ENCODE measurements at regions of chr12 and their contacts with region 1.

Region 1: GRCh38 chr12:111753144-111753881 is 13.4 kb upstream of the ALDH2 start:
- DNase-seq: peak in 2 of 3 donors; percentile 40 to 47
- H3K4me3 ChIP-seq: no peak overlapping the region
- H3K4me3 Mint-ChIP-seq: no peak overlapping the region
- H3K27ac ChIP-seq: peak overlapping the region in 1 of 2 donors; percentile 9
- H3K27ac Mint-ChIP-seq: peak overlapping the region in 1 of 7 donors; percentile 18
- H3K4me1 ChIP-seq: peaks cover 13 to 14% of the 10 kb centered on the region in 2 donors
- H3K4me1 Mint-ChIP-seq: peaks cover 19% of the 10 kb centered on the region
- H3K27me3 ChIP-seq: no peaks in the 10 kb centered on the region
- H3K27me3 Mint-ChIP-seq: peaks cover 0 to 3% (median 2%) of the 10 kb centered on the region in 3 donors
- CTCF ChIP-seq: peak; percentile 85

Region 2: DNA sequence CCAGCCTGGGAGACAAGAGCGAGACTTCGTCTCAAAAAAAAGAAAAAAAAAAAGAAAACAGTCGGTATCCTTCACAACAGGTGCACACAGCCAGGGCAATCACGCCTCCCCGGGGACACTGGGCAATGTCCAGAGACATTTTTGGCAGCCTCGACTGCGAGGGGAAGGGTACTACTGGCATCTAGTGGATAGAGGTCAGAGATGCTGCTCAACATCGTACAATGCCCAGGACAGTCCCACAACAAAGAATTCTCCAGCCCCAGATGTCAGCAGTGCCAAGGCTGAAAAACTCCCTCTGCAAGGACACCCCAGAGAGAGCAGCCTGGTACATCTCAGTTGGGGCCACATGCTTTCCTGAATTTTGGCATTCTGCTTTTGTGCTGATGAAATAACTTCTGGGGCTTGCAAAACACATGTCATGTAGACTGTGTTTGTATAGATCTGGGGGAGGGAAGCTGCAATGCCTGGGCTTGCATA is 34.9 kb after region 1 on chr12:
- intact Hi-C with region 1: loop called (anchors 2 to 5 kb)
- DNase-seq: peak in 2 of 3 donors; percentile 31 to 40
- H3K4me3 ChIP-seq: no peak overlapping the region
- H3K4me3 Mint-ChIP-seq: no peak overlapping the region
- H3K27ac ChIP-seq: peak overlapping the region in 1 of 2 donors; percentile 33
- H3K27ac Mint-ChIP-seq: peak overlapping the region in 4 of 7 donors; percentile 52 to 74 (median 61)
- H3K4me1 ChIP-seq: no peaks in the 10 kb centered on the region
- H3K4me1 Mint-ChIP-seq: peaks cover 4% of the 10 kb centered on the region
- H3K27me3 ChIP-seq: no peaks in the 10 kb centered on the region
- H3K27me3 Mint-ChIP-seq: no peaks in the 10 kb centered on the region
- CTCF ChIP-seq: peak; percentile 51

Region 3: GRCh38 chr12:111812881-111813741 is 59.8 kb after region 1 on chr12:
- intact Hi-C with region 1: loop called (anchors 2 to 10 kb)
- DNase-seq: peak; percentile 61 to 78 (median 73)
- H3K4me3 ChIP-seq: no peak overlapping the region
- H3K4me3 Mint-ChIP-seq: no peak overlapping the region
- H3K27ac ChIP-seq: peak overlapping the region in 1 of 2 donors; percentile 32
- H3K27ac Mint-ChIP-seq: peak overlapping the region in 5 of 7 donors; percentile 1 to 75 (median 65)
- H3K4me1 ChIP-seq: peaks cover 8 to 13% of the 10 kb centered on the region in 2 donors
- H3K4me1 Mint-ChIP-seq: peaks cover 23% of the 10 kb centered on the region
- H3K27me3 ChIP-seq: no peaks in the 10 kb centered on the region
- H3K27me3 Mint-ChIP-seq: no peaks in the 10 kb centered on the region
- CTCF ChIP-seq: peak; percentile 80